ENCODE measurements at regions of chr11 and their contacts with region 1.

Region 1: DNA sequence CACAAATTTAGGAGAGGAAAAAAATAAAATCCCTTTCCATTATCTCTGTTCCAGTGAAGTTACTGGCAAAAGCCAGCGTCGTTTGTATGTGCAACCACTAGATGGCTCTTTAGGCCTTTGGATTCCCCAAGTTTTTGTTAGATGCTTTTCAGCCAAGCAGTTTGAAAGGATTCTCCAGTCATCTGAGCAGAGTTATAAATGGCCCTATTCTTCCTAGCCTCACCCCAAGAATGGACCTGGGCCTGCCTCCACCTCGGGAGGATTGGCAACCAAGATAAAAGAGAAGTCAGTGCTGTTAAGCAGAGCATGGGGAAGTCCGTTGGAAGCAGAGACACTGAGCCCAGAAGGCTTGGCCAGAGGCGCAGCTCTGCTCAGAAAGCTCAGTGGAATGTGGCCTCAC is 15.4 kb downstream of the FAM181B start:
- DNase-seq: peak in 41 of 42 donors; percentile 8 to 83 (median 59)

Region 2: DNA sequence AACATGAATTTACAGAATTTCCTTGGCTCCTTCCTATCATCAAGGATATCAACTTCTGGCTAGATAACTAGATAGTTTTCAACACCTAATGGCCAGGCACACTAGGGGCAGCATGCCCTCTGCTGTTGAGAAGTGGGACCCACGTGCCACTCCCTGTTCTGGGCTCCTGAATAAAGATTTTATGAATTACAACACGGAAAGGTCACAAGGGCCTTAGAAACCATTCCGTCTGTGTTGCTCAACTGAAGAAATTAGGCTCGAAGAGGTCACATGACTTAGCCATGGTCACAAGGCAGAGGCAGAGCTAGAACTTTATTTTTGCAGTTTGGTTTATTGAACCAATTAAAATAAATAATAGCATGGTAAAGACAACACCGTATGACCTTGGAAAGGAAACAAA is 146.0 kb after region 1 on chr11:
- intact Hi-C with region 1: loop called (anchors 2 kb)
- DNase-seq: peak; percentile 56 to 92 (median 82)

Region 3: DNA sequence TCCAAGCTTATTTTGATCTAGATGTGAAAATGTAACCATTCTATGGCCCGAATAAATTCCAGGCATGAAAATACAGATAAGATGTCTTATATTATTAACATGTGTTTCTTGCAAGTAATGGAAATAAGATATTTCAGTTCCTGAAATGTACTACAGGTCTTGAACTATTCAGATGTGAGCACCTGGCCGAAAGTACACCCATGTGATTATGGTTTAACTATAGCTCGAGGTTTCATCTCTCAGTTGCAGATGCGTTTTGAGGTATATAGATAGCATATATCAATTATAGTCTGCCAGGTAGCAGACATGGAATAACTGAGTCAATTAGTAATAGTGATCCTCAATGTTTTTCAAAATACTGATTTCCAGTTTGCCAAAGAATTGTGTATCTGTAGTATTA is 251.5 kb after region 1 on chr11:
- intact Hi-C with region 1: no loop called
- DNase-seq: no peak

Region 4: GRCh38 chr11:83241291-83241946 is 523.1 kb after region 1 on chr11:
- intact Hi-C with region 1: loop called (anchors 10 kb)
- DNase-seq: peak in 23 of 42 donors; percentile 7 to 67 (median 24)

Measured in head of caudate nucleus (tissue), 42 donors.